Body of pancreas (tissue), 4 donors: ENCODE measurements at regions of chr16 and their contacts with region 1.

Region 1: GRCh38 chr16:75632857-75633256 is 9.8 kb upstream of the ADAT1 start:
- DNase-seq: no peak
- ATAC-seq: no peak
- H3K4me3 ChIP-seq: no peak overlapping the region
- H3K27ac ChIP-seq: no peak overlapping the region
- H3K4me1 ChIP-seq: no peaks in the 10 kb centered on the region
- H3K27me3 ChIP-seq: no peaks in the 10 kb centered on the region
- CTCF ChIP-seq: no peak
- POLR2A ChIP-seq: no peak

Region 2: DNA sequence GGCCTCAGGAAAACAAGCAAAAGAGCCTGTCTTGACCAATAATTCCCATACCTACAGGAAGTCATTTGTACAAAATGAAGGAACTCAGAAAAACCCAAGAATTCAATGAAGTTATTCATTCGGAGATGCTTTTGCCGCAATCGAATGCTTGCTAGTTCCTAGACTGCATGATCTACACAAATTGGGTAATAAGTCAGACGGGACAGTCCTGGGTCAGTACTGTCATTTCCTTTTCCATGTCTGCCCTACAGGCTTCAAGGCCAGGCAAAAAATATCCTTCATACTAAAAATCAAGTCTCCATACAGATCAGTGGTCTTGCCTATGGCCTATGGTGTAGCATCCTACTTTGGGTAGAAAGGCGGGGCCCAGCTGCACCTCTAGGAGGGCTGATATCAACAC is 270.9 kb before region 1 on chr16:
- intact Hi-C with region 1: no loop called
- DNase-seq: no peak
- ATAC-seq: no peak
- H3K4me3 ChIP-seq: no peak overlapping the region
- H3K27ac ChIP-seq: no peak overlapping the region
- H3K4me1 ChIP-seq: no peaks in the 10 kb centered on the region
- H3K27me3 ChIP-seq: no peaks in the 10 kb centered on the region
- CTCF ChIP-seq: no peak
- POLR2A ChIP-seq: no peak

Region 3: GRCh38 chr16:75452464-75453190 is 180.2 kb before region 1 on chr16:
- intact Hi-C with region 1: loop called (anchors 10 kb)
- DNase-seq: peak in 3 of 4 donors; percentile 18 to 26 (median 22)
- ATAC-seq: peak; percentile 76
- H3K4me3 ChIP-seq: no peak overlapping the region
- H3K27ac ChIP-seq: peak overlapping the region in 2 of 4 donors; percentile 1 to 18
- H3K4me1 ChIP-seq: peaks cover 32% of the 10 kb centered on the region
- H3K27me3 ChIP-seq: no peaks in the 10 kb centered on the region
- CTCF ChIP-seq: no peak
- POLR2A ChIP-seq: no peak

Region 4: DNA sequence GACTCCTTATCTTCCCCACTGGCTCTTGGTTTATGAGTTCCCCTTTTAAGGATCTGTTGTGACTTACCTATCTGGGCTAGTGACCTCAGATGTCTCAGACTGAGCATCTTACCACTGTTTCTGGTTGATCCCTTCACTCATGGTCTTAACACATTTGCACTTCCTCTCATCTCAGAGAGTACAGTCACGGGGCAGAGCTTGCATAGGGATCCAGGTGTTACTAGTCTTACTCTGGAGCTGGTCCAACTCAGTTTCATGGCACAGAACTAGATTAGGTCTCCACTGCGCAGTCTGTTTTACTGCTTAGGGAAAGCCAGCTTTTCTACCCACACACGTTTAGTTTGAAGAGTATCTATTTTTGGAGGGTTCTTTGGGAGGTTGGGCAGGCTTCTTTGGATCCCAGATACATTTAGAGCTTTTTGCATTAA is 56.5 kb before region 1 on chr16:
- intact Hi-C with region 1: no loop called
- DNase-seq: no peak
- ATAC-seq: no peak
- H3K4me3 ChIP-seq: no peak overlapping the region
- H3K27ac ChIP-seq: no peak overlapping the region
- H3K4me1 ChIP-seq: no peaks in the 10 kb centered on the region
- H3K27me3 ChIP-seq: no peaks in the 10 kb centered on the region
- CTCF ChIP-seq: no peak
- POLR2A ChIP-seq: no peak

Region 5: DNA sequence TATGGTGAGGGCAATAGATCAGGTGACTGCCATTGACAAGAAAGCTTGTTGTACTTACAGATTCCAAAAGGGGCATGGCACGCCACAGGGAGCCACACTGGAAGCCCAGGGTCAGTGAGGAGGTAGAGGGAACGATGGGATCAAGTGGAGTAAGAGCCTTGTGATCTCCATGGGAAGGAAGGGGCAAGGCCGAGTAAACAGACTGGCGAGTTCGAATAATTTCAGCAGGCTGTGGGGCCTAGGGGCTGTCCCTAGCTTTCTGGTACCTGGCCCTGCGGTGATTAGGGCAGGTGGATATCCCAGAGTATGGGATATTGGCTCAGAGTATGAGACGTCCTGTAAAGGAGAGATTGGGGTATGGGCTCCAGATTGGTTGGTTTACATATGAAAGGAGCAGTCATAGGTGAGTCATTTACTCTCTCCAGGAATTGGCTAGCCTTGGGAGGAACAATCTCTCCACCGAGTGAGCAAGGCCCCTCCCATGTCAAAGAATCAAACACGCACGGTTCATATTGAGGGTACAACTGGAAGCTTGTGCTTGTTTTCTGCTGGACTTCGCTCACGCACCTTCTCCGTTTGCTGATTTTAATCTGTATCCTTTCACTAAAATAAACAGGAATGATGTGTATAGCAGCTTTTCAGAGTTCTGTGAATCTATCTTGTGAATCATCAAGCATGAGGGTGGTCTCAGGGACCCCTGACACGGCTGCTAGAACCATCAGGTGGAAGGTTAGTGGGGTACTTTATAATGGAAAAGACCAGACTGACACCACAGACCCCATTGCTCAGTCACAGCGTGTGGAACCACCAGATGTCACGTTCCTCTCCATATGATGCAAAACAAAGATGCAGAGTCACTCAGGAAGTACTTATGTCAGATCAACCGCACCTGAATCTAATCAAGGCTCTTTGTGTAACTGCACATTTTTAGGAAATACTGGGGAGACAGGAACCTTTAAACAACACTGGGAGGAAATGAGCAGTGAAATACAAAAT is 38.7 kb before region 1 on chr16:
- intact Hi-C with region 1: no loop called
- DNase-seq: no peak
- ATAC-seq: no peak
- H3K4me3 ChIP-seq: no peak overlapping the region
- H3K27ac ChIP-seq: no peak overlapping the region
- H3K4me1 ChIP-seq: no peaks in the 10 kb centered on the region
- H3K27me3 ChIP-seq: no peaks in the 10 kb centered on the region
- CTCF ChIP-seq: no peak
- POLR2A ChIP-seq: no peak